ENCODE measurements at regions of chr5 and their contacts with region 1.

Region 1: GRCh38 chr5:151223469-151224264 is at the start of gene CCDC69:
- DNase-seq: peak; percentile 68 to 91
- ATAC-seq: peak; percentile 92 to 97
- H3K4me3 ChIP-seq: peak within 1 kb of the TSS; percentile 80
- H3K27ac ChIP-seq: peak within 1 kb of the TSS; percentile 71 to 83
- H3K4me1 ChIP-seq: no peaks in the 10 kb centered on the region
- CTCF ChIP-seq: peak; percentile 9; the same call in 1 of the 3 replicates
- EP300 ChIP-seq: no peak
- POLR2A ChIP-seq: 0 out of 2 replicates have a peak, but pooled peaks have one; percentile 12
- RAD21 ChIP-seq: no peak
- polyA plus RNA-seq, gene CCDC69: 3.0 and 3.2 TPM in 2 replicates

Region 2: DNA sequence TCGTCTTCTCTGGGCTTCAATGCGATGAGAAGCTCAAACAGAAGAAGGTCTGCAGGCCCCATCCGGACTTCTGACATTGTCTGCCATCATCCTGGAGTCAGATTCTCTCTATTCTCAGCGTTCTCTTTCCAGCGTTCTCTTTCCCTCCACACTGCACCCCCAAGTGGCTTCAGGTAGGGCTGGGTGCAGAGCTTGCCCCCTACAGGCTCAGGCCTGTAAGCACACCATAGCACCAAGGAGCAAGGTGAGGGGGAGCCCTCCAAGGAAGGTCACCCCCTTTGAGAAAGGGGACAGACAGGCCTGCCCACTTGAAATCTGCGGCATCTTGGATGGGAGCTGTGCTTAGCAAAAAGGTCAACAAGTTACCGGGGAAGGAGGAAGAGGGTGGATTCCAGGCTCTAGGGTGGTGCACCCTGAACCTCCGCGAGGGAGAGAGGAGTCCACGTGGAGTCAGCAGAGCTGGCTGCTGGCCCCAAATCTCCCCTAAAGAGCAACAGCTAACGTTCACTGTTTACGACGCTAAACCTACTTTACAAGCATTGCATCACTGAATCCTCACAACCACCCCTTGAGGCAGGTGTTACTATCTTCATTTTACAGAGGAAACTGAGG is 175.7 kb before region 1 on chr5:
- CTCF ChIA-PET with region 1: no interaction called
- POLR2A ChIA-PET with region 1: no interaction called
- DNase-seq: peak in 1 of 2 experiments; percentile 28
- ATAC-seq: peak; percentile 75 to 78; a peak in 5 of 6 replicates
- H3K4me3 ChIP-seq: no peak overlapping the region
- H3K27ac ChIP-seq: no peak overlapping the region
- H3K4me1 ChIP-seq: peaks cover 12% of the 10 kb centered on the region
- CTCF ChIP-seq: peak; percentile 45
- EP300 ChIP-seq: no peak
- POLR2A ChIP-seq: no peak
- RAD21 ChIP-seq: peak; percentile 16 to 46; a peak in 1 of 5 replicates

Region 3: GRCh38 chr5:151202381-151203139 is 21.1 kb before region 1 on chr5:
- CTCF ChIA-PET with region 1: no interaction called
- POLR2A ChIA-PET with region 1: no interaction called
- DNase-seq: peak in 1 of 2 experiments; percentile 16
- ATAC-seq: peak; percentile 52 to 71; a peak in 3 of 6 replicates
- H3K4me3 ChIP-seq: no peak overlapping the region
- H3K27ac ChIP-seq: no peak overlapping the region
- H3K4me1 ChIP-seq: peaks cover 4% of the 10 kb centered on the region; the same call in 1 of the 3 replicates
- CTCF ChIP-seq: no peak
- EP300 ChIP-seq: no peak
- POLR2A ChIP-seq: no peak
- RAD21 ChIP-seq: no peak

Region 4: GRCh38 chr5:151239237-151239861 is 15.7 kb after region 1 on chr5:
- CTCF ChIA-PET with region 1: interaction called, 24 read pairs
- POLR2A ChIA-PET with region 1: interaction called, 8 read pairs
- DNase-seq: peak; percentile 60 to 67
- ATAC-seq: peak; percentile 79 to 91
- H3K4me3 ChIP-seq: no peak overlapping the region
- H3K27ac ChIP-seq: no peak overlapping the region
- H3K4me1 ChIP-seq: 0 out of 3 replicates have a peak, but pooled peaks cover 3% of the 10 kb centered on the region
- CTCF ChIP-seq: peak; percentile 61
- EP300 ChIP-seq: no peak
- POLR2A ChIP-seq: no peak
- RAD21 ChIP-seq: peak; percentile 74 to 77

Region 5: DNA sequence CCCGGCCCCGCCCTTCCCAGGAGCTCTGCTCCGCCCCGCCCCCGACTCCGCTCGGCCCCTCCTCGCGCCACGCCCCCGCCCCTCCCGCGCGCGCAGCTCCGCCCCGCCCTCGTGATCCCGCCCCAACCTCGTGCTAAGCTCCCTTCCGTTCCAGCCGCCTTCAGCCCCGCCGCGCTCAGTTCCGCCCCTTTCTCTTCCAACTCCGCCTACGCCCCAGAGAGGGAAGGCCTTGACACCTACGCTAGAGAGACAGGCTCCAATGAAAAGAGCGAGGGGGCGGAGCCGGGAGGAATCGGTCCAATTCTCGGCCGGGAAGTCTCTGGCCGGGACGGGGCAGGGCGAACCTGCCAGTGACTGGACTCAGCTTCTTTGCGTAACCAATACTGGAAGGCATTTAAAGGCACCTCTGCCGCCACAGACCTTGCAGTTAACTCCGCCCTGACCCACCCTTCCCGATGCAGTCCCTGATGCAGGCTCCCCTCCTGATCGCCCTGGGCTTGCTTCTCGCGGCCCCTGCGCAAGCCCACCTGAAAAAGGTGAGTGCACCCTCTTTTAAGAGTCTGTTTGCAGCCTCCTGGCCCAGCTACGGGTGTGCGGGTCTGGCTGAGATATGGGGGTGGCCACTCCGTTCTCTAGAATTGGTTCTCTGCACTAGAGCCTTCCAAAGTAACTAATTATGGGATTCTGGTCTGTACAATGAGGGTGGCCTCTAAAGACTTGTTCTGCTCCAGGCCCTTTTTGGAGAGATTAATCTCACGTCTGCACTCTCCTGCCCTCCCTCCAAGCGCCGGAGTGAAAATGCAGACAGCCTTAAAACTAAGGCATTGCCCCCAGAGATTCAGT is 29.3 kb after region 1 on chr5 and contains the start of gene GM2A:
- CTCF ChIA-PET with region 1: interaction called, 5 read pairs
- POLR2A ChIA-PET with region 1: interaction called, 11 read pairs
- DNase-seq: peak; percentile 98 to 99
- ATAC-seq: peak; percentile 96 to 99
- H3K4me3 ChIP-seq: peak within 1 kb of the TSS; percentile 59
- H3K27ac ChIP-seq: peak within 1 kb of the TSS; percentile 71 to 86
- H3K4me1 ChIP-seq: peaks cover 13% of the 10 kb centered on the region; the same call in 2 of the 3 replicates
- CTCF ChIP-seq: no peak
- EP300 ChIP-seq: no peak
- POLR2A ChIP-seq: peak; percentile 64
- RAD21 ChIP-seq: no peak
- polyA plus RNA-seq, gene GM2A: 9.6 and 13.8 TPM in 2 replicates

Region 6: DNA sequence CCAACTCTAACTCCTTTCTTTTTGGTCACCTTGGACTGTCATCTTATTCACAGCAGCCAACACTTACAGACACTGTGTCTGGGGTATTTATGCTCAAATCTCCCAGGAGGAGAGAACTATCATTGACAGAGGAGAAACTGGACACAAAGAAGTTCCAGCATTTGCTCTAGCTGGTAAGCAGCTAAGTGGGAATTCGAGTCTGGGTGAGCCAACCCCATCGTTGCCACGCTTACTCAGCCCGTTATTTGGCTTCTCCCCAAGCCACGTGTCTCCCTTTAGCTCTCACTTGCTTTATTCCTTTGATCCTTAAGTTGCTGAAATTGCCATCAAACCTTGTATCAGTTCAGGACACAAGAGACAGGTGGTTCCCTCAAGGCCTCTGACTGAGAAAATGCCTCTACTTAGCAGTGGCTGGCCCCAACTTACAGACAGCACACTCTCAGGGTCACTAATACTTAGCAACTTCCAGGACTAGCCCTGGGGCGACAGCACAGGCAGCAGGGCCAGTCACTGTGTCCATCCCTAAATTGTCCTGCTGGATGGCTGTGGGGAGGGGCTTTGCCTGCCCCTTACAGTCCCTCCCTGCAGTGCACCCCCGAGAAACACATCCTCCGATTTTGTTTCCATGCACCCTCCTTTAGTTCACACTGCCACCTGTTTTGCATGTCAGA is 122.3 kb after region 1 on chr5:
- CTCF ChIA-PET with region 1: no interaction called
- POLR2A ChIA-PET with region 1: no interaction called
- DNase-seq: no peak
- ATAC-seq: peak in 1 of 2 experiments; percentile 57; a peak in 2 of 6 replicates
- H3K4me3 ChIP-seq: no peak overlapping the region
- H3K27ac ChIP-seq: no peak overlapping the region
- H3K4me1 ChIP-seq: no peaks in the 10 kb centered on the region
- CTCF ChIP-seq: no peak
- EP300 ChIP-seq: no peak
- POLR2A ChIP-seq: no peak
- RAD21 ChIP-seq: no peak

Measured in A549 (cell line).